ENCODE measurements at regions of chr5 and their contacts with region 1.

Region 1: DNA sequence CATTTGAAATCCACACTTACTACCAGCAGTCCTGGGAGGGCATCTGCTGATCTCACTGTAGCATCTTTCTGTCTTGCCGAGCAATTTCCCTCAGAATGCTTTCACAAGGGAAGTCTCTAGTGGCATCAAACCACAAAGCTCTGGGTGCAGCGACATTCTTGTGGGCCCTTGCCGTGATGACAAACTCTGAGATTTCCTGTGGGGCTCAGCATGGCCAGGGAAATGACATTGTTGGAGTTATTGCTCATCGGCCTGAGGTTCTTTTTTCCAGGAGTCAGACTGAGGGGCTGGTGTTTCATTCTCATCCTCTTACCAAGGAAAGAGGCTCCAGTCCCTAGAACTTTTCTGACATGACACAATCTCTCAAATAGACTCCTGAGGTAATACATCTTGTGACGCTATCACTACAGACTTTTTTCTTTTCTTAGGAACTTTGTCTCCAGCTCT is 51.4 kb downstream of the PFDN1 start:
- DNase-seq: peak; percentile 87
- H3K4me3 Mint-ChIP-seq: no peak overlapping the region
- H3K27ac Mint-ChIP-seq: peak overlapping the region; percentile 68
- H3K4me1 Mint-ChIP-seq: peaks cover 33% of the 10 kb centered on the region
- H3K27me3 Mint-ChIP-seq: no peaks in the 10 kb centered on the region

Region 2: GRCh38 chr5:140267559-140268018 is 16.0 kb after region 1 on chr5:
- CTCF ChIA-PET with region 1: no interaction called
- intact Hi-C with region 1: loop called (anchors 2 kb)
- DNase-seq: no peak
- H3K4me3 Mint-ChIP-seq: peak overlapping the region; percentile 19
- H3K27ac Mint-ChIP-seq: peak overlapping the region; percentile 56
- H3K4me1 Mint-ChIP-seq: peaks cover 30% of the 10 kb centered on the region
- H3K27me3 Mint-ChIP-seq: no peaks in the 10 kb centered on the region

Region 3: GRCh38 chr5:140282266-140282665 is 30.7 kb after region 1 on chr5:
- CTCF ChIA-PET with region 1: no interaction called
- intact Hi-C with region 1: no loop called
- DNase-seq: no peak
- H3K4me3 Mint-ChIP-seq: no peak overlapping the region
- H3K27ac Mint-ChIP-seq: no peak overlapping the region
- H3K4me1 Mint-ChIP-seq: peaks cover 14% of the 10 kb centered on the region
- H3K27me3 Mint-ChIP-seq: no peaks in the 10 kb centered on the region

Region 4: DNA sequence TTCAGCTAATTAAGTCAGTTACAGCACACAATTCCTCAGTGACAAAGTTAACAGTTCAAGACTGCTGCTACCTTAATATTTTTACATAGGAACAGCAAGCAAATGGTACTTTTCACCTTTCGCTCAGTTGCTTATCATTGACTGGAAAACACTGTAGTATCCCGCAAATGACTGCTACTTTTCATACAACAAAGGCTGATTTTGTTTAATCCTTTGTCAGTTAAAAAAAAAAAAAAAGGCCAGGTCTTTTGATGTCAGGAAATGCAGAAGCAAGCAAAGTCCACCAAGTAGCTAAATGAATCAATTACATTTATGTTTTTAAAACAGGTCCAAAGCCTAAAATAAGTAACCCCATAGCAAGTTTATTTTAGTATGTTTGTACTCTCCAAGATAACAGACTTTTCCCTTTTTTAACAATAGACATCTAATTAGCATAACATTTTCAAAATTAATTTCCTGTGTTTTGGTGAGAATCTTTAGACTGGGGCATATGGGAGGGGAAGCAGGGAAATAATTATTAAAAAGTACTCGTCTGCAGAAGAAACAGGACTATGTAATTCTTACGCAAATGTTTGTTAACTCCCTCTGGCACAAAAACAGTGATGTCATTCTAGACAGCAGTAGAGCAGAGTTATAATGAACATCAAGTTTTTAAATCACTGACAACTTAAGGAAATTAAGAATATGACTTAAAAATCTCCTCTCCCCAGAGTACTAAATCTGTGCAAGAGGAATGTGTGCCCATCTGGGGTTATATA is 41.7 kb after region 1 on chr5:
- CTCF ChIA-PET with region 1: no interaction called
- intact Hi-C with region 1: loop called (anchors 1 kb)
- DNase-seq: no peak
- H3K4me3 Mint-ChIP-seq: peak overlapping the region; percentile 14
- H3K27ac Mint-ChIP-seq: peak overlapping the region; percentile 68
- H3K4me1 Mint-ChIP-seq: peaks cover 52% of the 10 kb centered on the region
- H3K27me3 Mint-ChIP-seq: no peaks in the 10 kb centered on the region

Region 5: GRCh38 chr5:140547508-140548299 is 296.2 kb after region 1 on chr5 and contains the start of gene EIF4EBP3:
- CTCF ChIA-PET with region 1: no interaction called
- intact Hi-C with region 1: loop called (anchors 5 kb)
- DNase-seq: peak; percentile 93
- H3K4me3 Mint-ChIP-seq: peak within 1 kb of the TSS; percentile 87
- H3K27ac Mint-ChIP-seq: peak within 1 kb of the TSS; percentile 94
- H3K4me1 Mint-ChIP-seq: peaks cover 42% of the 10 kb centered on the region
- H3K27me3 Mint-ChIP-seq: no peaks in the 10 kb centered on the region
- total RNA-seq, gene EIF4EBP3: 27.2 to 28.5 TPM

Measured in activated naive CD4-positive, alpha-beta T cell treated with anti-CD3 and anti-CD28 coated beads for 36 hours (primary cell).